ENCODE measurements at regions of chr10 and their contacts with region 1.

Region 1: DNA sequence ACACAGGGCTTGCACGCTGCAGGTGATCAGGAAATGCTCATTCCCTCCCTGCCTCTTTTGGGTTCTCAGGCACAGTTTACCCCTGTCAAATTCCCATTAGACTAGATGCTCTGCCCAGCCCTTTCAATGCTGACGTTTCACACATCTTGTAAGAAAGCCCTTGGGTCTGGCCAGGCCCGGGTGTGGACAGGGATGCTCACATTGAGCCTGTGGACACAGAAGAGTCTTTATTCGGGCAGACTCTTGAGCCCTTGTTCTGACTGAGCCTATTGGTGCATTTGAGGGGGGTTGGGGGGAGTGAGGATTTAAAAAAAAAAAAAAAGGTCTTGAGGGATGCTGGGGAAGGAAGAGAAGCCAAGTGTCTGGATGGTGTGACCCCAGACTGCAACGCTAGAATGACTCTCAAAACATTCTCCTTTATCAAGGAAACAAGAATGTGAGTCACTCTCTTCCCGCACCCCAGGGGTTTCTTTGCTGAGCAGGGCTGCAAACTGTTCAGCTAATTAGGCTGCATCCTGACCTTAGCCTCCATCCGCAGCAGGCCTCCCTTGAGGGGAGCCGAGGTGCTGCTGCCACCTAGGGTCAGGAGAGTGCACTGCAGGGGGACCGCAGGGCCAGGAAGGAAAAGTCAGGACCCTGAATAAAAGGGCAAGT is 53.6 kb upstream of the TMEM72 start:
- DNase-seq: peak; percentile 38 to 86 (median 72)
- ATAC-seq: peak; percentile 71 to 91 (median 89)
- H3K4me3 ChIP-seq: no peak overlapping the region
- H3K27ac ChIP-seq: no peak overlapping the region
- H3K4me1 ChIP-seq: no peaks in the 10 kb centered on the region
- H3K27me3 ChIP-seq: no peaks in the 10 kb centered on the region
- CTCF ChIP-seq: peak; percentile 96 to 99 (median 98)

Region 2: GRCh38 chr10:44398747-44399658 is 458.5 kb before region 1 on chr10:
- intact Hi-C with region 1: loop called in 1 of 3 experiments (anchors 10 kb)
- DNase-seq: no peak
- ATAC-seq: no peak
- H3K4me3 ChIP-seq: no peak overlapping the region
- H3K27ac ChIP-seq: no peak overlapping the region
- H3K4me1 ChIP-seq: no peaks in the 10 kb centered on the region
- H3K27me3 ChIP-seq: no peaks in the 10 kb centered on the region
- CTCF ChIP-seq: no peak

Region 3: GRCh38 chr10:44569193-44570091 is 288.0 kb before region 1 on chr10:
- intact Hi-C with region 1: loop called in 1 of 3 experiments (anchors 10 kb)
- DNase-seq: no peak
- ATAC-seq: peak in 2 of 4 donors; percentile 12 to 20
- H3K4me3 ChIP-seq: no peak overlapping the region
- H3K27ac ChIP-seq: no peak overlapping the region
- H3K4me1 ChIP-seq: no peaks in the 10 kb centered on the region
- H3K27me3 ChIP-seq: no peaks in the 10 kb centered on the region
- CTCF ChIP-seq: no peak

Region 4: DNA sequence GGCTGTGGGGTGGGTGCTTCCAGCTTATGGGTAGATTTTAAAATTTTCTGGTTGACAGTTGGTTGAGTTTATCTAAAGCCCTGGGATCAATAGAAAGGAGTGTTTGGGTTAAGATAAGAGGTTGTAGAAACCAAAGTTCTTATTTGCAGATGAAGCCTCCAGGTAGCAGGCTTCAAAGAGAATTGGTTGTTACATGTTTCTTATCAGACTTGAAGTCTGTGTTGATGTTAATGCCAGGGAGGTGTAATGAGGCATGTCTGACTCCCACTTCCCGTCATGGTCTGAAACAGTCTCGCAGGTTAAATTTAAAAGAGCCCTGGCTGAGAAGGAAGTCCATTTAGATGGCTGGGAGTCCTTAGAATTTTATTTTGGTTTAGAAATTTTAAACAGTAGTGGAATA is 111.6 kb before region 1 on chr10:
- intact Hi-C with region 1: loop called in 1 of 3 experiments (anchors 10 kb)
- DNase-seq: no peak
- ATAC-seq: peak in 3 of 4 donors; percentile 64 to 88 (median 87)
- H3K4me3 ChIP-seq: no peak overlapping the region
- H3K27ac ChIP-seq: no peak overlapping the region
- H3K4me1 ChIP-seq: peaks cover 0 to 8% (median 0%) of the 10 kb centered on the region in 3 donors
- H3K27me3 ChIP-seq: no peaks in the 10 kb centered on the region
- CTCF ChIP-seq: no peak